ENCODE measurements at regions of chr6 and their contacts with region 1.

Region 1: DNA sequence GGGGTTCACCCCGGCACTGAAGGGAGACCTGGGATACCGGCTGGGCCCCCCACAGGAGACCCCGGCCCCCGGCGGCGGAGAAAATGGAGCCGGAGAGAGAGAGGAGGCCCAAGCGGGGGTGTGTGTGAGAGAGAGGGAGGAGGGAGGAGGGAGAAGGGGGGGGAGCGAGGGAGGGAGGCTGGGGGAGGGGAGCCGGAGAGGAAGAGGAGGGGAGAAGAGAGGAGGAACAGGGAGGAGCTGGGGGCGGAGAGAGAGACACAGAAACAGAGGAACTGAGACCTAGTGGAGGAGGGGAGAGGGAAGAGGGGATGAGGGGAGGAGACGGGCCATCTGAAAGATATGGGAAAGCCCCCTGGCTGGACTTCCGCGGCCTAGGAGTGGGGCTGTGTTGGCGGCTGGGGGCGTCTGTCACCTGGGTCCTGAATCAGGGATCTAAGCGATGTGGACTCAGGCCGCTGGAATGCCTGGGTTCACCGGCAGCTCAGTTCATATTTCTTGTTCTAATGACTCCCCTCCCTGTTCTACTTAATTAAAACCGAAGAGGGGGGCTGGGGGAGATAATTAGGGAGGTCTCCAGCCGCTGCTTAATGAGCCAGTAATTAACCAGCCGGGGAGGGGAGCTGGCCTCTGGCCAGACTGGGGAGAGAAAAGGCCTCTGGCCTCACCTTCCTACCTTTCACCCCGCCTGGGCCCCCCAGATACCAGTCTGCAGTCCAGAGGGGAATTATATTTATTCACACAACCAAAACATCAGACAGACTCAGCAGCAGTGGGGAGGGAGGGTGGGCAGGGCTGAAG is at the start of gene PBX2:
- DNase-seq: peak; percentile 92
- ATAC-seq: peak; percentile 67
- H3K4me3 Mint-ChIP-seq: peak within 1 kb of the TSS; percentile 98
- H3K27ac Mint-ChIP-seq: peak within 1 kb of the TSS; percentile 95
- H3K4me1 Mint-ChIP-seq: peaks cover 55% of the 10 kb centered on the region
- H3K27me3 Mint-ChIP-seq: no peaks in the 10 kb centered on the region
- total RNA-seq, gene PBX2: 60.0 to 61.6 TPM

Region 2: DNA sequence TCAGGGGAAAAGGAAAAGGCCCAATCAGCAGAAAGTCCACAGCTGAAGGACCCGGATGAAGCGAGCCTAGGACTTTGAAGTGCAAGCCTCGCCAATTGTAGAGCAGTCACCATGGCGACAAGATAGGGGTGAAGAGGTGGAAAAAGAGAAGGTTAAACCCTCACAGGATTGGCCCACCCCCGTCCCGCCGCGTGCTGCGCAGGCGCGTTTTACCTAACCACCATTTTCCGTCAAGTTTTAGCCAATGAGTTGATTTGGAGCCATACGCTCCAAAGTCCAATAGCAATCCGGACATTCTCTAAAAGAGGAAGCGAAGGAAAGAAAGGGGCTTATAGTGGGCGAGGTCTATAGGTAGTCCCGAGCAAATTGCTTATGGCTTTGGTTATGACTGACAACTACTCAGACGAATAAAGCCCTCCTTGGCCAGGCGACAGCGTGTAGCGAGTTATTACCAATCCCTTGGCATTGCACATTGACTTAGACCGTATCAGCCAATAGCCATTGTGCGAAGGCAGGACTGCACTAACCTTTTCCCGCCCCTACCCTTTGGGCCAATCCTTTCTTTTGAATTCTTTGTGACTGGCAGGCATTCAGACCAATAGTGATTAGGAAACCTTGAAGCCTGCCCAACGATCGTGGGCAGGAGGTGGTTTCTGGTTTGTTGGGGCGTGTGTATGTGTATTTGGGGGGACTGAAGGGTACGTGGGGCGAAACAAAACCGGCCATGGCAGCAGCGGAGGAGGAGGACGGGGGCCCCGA is 12.3 kb before region 1 on chr6 and contains the start of gene RNF5:
- CTCF ChIA-PET with region 1: interaction called, 31 read pairs
- DNase-seq: peak; percentile 98
- ATAC-seq: peak; percentile 86
- H3K4me3 Mint-ChIP-seq: peak within 1 kb of the TSS; percentile 93
- H3K27ac Mint-ChIP-seq: peak within 1 kb of the TSS; percentile 94
- H3K4me1 Mint-ChIP-seq: peaks cover 58% of the 10 kb centered on the region
- H3K27me3 Mint-ChIP-seq: no peaks in the 10 kb centered on the region
- total RNA-seq, gene RNF5: 41.0 to 51.9 TPM

Measured in activated CD8-positive, alpha-beta memory T cell treated with anti-CD3 and anti-CD28 coated beads, Interleukin-2, amount 10 ng/mL, durations not matched to agents 7 days and 5 days (primary cell).